Activated naive CD4-positive, alpha-beta T cell treated with anti-CD3 and anti-CD28 coated beads, Interleukin-2, amount 10 ng/mL, durations not matched to agents 7 days and 5 days (primary cell): ENCODE measurements at regions of chr3 and their contacts with region 1.

Region 1: DNA sequence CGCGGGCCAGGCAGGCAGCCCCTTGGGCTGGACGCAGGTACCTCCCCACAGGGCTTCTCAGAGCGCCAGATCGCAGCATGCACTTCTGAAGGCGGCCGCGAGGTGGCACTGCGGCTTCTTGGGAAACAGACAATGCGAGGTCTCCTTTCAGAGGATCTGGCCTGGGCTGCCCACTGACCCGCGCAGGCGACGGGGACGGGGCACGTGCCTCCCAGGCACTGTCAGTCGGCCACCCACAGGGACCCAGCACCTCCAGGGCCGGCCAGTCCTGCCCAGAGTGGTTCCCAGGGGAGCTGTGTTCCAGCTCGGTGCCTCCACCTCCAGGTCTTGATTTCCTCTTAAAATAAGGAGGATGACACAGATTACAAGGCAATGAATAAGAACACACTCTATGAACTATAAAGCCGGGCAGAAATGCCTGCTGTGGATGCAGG is 24.4 kb upstream of the TXNRD3 start:
- DNase-seq: peak; percentile 82
- H3K4me3 Mint-ChIP-seq: no peak overlapping the region
- H3K27ac Mint-ChIP-seq: no peak overlapping the region
- H3K4me1 Mint-ChIP-seq: peaks cover 7% of the 10 kb centered on the region
- H3K27me3 Mint-ChIP-seq: peaks cover 40% of the 10 kb centered on the region

Region 2: DNA sequence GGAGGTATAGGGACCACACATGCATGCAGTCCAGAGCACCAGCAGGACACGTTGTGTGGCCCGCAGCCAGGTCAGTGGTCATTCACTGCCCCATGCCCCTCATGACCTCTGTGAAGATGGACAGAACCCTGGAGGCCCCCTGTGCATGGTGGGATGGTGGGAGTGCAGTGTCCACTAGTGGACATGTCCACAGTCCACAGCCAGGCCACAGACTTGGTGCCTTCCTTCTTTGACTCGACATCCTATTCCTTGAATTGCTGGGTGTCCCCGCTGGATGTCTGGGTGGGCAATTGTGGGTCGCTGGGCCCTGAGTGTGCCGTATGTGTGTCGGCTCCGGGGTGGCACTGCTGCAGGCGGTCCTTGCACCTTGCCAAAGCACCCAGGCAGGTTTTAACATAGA is 357.8 kb before region 1 on chr3:
- CTCF ChIA-PET with region 1: no interaction called
- DNase-seq: no peak
- H3K4me3 Mint-ChIP-seq: no peak overlapping the region
- H3K27ac Mint-ChIP-seq: no peak overlapping the region
- H3K4me1 Mint-ChIP-seq: no peaks in the 10 kb centered on the region
- H3K27me3 Mint-ChIP-seq: peaks cover 7% of the 10 kb centered on the region

Region 3: DNA sequence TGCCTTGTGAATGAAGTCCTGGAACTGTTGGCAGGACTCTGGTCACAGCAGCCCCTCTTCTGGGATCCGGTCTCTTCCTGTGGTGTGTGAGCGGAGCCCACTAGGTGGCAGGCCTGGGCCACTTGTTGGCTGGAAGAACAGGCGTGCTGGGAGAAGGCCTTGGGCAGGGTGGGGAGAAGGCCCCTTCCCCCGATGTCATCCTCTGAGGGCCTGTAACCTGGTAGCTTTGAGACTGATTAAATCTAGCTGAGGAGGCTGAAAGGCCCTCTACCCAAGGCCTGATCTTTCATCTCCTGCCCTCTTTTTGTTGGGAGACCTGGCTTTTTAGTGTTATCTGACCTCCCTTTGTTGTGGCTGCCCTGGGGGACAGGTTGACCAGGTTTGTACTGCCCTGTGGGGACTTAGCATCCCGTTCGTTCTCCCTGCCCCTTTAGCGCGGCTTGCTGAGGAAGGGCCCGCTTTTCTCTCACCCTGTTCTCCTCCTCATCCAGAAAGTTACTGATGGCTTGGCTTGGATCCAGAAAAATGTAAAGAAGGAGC is 73.0 kb after region 1 on chr3:
- CTCF ChIA-PET with region 1: interaction called, 10 read pairs
- DNase-seq: peak; percentile 72
- H3K4me3 Mint-ChIP-seq: no peak overlapping the region
- H3K27ac Mint-ChIP-seq: no peak overlapping the region
- H3K4me1 Mint-ChIP-seq: peaks cover 6% of the 10 kb centered on the region
- H3K27me3 Mint-ChIP-seq: no peaks in the 10 kb centered on the region

Region 4: DNA sequence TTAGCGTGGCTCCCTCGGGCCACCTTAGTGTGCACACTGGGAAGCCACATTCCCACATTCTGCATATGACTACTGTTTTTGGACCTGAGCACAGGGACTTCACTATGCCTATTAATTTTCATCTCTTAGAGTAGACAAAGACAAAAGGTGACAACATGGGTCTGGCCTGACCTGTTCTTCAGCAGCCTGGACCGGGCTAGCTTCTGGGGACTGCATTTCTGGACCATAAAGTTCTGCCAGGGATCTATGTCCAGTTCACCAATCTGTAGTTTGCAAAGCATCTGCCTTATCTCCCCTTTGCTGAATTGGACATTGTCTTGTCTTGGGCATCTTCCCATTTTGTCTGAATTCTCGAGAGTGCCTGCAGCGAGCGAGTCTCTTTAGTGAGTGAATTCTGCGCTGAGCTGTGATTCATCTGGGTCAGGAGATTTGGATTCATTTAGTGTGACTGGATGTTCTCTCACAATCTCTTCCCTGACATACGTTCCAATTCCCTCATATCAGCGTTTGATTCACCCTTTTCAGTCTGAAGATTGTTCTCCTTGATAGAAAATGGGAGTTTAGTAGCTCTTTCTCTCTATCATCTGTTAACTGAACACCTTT is 191.4 kb after region 1 on chr3:
- CTCF ChIA-PET with region 1: no interaction called
- DNase-seq: no peak
- H3K4me3 Mint-ChIP-seq: no peak overlapping the region
- H3K27ac Mint-ChIP-seq: peak overlapping the region; percentile 25
- H3K4me1 Mint-ChIP-seq: no peaks in the 10 kb centered on the region
- H3K27me3 Mint-ChIP-seq: no peaks in the 10 kb centered on the region

Region 5: DNA sequence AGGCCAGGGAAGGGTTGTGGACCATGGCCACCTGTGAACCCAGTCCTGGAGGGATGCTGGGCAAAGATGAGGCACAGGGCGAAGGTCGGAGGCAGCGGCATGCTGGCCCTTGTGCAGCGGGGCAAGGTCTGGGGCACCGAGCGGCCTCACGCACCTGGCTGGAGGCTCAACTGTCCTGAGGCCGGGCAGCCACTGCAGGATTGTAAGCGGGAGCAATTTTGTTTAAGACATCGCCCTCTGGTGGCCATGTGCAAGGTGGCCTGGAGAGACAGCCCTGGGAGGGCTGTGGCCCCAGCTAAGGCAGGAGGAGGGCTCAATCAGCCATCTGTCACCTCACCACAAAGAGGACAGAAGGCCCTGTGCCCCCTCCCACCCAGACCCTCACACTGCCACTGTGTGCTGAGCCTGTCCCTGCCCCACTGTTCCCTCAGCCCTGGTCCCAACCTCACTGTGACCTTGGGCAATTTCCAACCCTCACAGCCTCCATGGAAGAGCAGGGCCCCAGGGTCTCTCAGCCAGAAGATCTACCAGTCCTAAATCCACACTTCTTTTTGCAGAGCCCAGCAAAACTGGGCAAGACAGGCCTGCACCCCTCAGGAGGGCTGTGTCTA is 865.0 kb after region 1 on chr3:
- CTCF ChIA-PET with region 1: interaction called, 28 read pairs
- DNase-seq: peak; percentile 80
- H3K4me3 Mint-ChIP-seq: no peak overlapping the region
- H3K27ac Mint-ChIP-seq: no peak overlapping the region
- H3K4me1 Mint-ChIP-seq: peaks cover 10% of the 10 kb centered on the region
- H3K27me3 Mint-ChIP-seq: peaks cover 45% of the 10 kb centered on the region